ENCODE measurements at regions of chr3 and their contacts with region 1.

Region 1: DNA sequence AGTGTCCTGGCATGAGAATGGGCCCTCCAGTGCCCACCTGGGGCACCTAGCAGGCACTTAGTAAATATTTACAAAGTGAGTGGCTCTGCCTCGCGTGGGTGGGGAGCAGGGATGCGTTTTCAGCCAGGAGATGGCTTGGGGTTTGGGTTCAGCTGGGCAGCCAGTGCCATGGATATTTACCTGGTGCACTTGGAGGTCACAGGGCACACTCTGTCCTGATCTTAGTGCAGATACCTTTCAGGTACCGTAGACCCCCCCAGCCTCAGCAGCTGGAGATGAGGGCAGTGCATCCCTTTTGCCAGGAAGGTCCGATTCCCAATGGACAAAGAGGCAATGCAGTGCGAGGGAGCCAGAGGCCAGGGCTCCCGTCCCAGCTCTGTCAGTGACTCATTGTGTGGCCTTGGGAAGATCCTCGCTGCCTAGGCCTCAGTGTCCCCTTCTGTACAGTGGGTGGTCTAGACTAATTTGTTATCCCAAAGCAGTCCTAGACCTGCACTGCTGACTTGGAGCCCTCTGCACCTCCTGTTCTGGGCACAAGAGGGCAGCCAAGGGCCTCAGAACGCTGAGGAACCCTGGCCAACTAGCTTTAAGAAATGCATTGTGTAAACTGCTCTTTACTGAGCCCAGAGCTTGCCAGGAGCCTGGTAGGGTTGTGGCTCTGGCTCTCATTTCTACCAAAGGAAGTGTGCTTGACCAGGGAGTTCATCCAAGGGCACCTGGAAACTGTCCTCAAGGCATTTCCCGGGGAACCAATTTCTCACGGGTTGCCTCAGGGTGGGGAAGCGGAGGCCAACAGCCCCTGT is 16.0 kb downstream of the HDAC11 start:
- DNase-seq: peak; percentile 68 to 91 (median 81)
- H3K4me3 ChIP-seq: no peak overlapping the region
- H3K27ac ChIP-seq: no peak overlapping the region
- H3K4me1 ChIP-seq: no peaks in the 10 kb centered on the region
- H3K27me3 ChIP-seq: no peaks in the 10 kb centered on the region
- CTCF ChIP-seq: peak; percentile 78 to 93 (median 88)
- POLR2A ChIP-seq: no peak

Region 2: GRCh38 chr3:13581485-13582380 is 85.6 kb after region 1 on chr3:
- intact Hi-C with region 1: no loop called
- DNase-seq: peak in 2 of 7 donors; percentile 25 to 49
- H3K4me3 ChIP-seq: no peak overlapping the region
- H3K27ac ChIP-seq: no peak overlapping the region
- H3K4me1 ChIP-seq: no peaks in the 10 kb centered on the region
- H3K27me3 ChIP-seq: no peaks in the 10 kb centered on the region
- CTCF ChIP-seq: no peak
- POLR2A ChIP-seq: no peak

Region 3: GRCh38 chr3:13648060-13649001 is 152.2 kb after region 1 on chr3:
- intact Hi-C with region 1: loop called (anchors 2 kb)
- DNase-seq: peak; percentile 70 to 91 (median 82)
- H3K4me3 ChIP-seq: no peak overlapping the region
- H3K27ac ChIP-seq: no peak overlapping the region
- H3K4me1 ChIP-seq: no peaks in the 10 kb centered on the region
- H3K27me3 ChIP-seq: peaks cover 4% of the 10 kb centered on the region
- CTCF ChIP-seq: peak; percentile 87 to 99 (median 94)
- POLR2A ChIP-seq: no peak

Measured in adrenal gland (tissue), 19 donors.